Panc1 (cell line): ENCODE measurements at regions of chr5 and their contacts with region 1.

Region 1: GRCh38 chr5:150672237-150672883 is 11.3 kb downstream of the MYOZ3 start:
- DNase-seq: no peak
- ATAC-seq: peak; percentile 81
- H3K4me3 ChIP-seq: peak overlapping the region; percentile 49 to 68
- H3K27ac ChIP-seq: peak overlapping the region; percentile 65
- H3K4me1 ChIP-seq: peaks cover 11% of the 10 kb centered on the region
- H3K27me3 ChIP-seq: no peaks in the 10 kb centered on the region
- CTCF ChIP-seq: no peak

Region 2: DNA sequence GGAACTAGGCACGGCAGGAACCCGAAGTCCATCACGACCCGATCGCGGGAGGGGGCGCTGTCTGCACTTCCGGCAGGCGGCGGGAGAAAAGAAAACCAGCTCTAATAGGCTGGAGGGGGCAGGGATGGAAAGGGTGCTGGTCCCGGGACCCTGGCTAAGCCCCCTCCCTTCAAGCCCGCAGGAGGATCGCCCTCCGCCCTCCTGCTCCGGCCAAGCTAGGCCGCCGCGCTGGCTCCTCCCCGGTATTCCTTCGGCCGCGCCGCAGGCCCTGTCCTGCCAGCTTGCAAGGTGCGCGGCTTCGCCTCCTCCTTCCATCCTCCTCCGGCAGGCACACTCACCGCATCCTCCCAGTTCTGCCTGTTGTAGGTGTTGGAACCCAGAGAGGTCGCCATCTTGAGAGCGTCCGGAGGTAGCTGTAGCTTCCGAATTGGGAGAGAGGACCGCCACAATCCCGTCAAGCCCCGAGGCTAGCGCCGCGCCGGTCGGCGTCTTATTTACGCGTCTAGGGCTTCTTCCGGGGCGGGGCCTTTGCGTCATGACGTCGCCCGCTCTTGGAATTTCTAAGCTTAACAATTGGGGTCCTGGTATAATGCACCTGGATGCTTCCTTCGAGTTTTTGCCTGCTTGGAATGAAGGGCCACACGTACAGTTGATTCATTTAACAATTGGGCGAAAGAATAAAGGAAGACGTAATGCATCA is 28.4 kb after region 1 on chr5 and contains the start of gene RBM22:
- CTCF ChIA-PET with region 1: no interaction called
- POLR2A ChIA-PET with region 1: interaction called, 13 read pairs
- in situ Hi-C with region 1: no loop called
- intact Hi-C with region 1: no loop called
- DNase-seq: peak; percentile 62
- ATAC-seq: peak; percentile 98
- H3K4me3 ChIP-seq: peak within 1 kb of the TSS; percentile 89 to 98
- H3K27ac ChIP-seq: peak within 1 kb of the TSS; percentile 90
- H3K4me1 ChIP-seq: peaks cover 14% of the 10 kb centered on the region
- H3K27me3 ChIP-seq: no peaks in the 10 kb centered on the region
- CTCF ChIP-seq: peak; percentile 82
- total RNA-seq, gene RBM22: 54.3 TPM

Region 3: GRCh38 chr5:150829744-150830143 is 157.4 kb after region 1 on chr5:
- CTCF ChIA-PET with region 1: no interaction called
- POLR2A ChIA-PET with region 1: no interaction called
- in situ Hi-C with region 1: no loop called
- intact Hi-C with region 1: no loop called
- DNase-seq: no peak
- ATAC-seq: no peak
- H3K4me3 ChIP-seq: no peak overlapping the region
- H3K27ac ChIP-seq: no peak overlapping the region
- H3K4me1 ChIP-seq: no peaks in the 10 kb centered on the region
- H3K27me3 ChIP-seq: no peaks in the 10 kb centered on the region
- CTCF ChIP-seq: no peak